Gastrocnemius medialis (tissue), 4 donors: ENCODE measurements at regions of chr6 and their contacts with region 1.

Region 1: DNA sequence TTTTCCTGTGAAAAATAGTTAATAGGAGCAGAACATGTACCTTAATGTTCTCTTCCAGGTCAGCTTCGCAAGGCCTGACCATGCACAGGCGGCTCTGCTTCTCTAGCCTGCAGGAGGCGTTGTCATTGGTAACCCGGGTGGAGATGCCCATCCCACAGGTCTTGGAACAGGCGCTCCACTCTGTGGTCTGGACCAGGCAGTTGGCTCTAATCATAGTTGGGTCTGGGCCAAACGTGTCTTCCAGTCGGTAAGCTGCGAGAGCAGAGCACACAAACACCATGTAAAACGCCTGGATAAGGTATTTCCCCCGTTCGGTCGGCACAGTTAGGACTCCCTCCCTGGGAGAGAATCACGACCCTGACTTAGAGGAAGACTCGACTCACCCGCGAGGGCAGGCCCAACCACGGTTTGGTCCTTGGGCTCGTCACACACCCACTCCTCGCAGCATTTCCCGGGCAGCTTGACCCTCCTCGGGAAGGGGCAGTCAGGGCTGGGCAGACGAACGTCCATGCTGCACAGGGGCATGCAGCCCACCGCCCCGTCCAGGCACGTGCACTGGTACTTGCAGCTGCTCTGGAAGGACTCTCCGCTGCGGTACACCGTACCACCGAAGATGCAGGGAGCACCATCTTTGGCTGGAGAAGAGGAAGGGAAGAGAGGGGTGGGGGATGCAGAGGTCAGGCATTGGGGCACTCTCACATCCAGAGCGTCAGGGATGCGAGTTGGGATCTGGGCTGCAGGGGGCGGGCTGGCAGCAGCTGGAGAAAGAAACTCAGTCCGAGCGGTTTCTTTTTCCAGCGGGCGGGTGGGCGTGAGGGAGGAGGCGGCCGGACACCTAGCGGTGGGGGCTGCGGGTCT is 1.0 kb downstream of the CCN2 start:
- DNase-seq: peak; percentile 18 to 46
- ATAC-seq: peak; percentile 27 to 48
- H3K4me3 ChIP-seq: peak overlapping the region; percentile 58 to 64 (median 61)
- H3K27ac ChIP-seq: peak overlapping the region; percentile 61 to 82 (median 75)
- H3K4me1 ChIP-seq: peaks cover 5 to 6% of the 10 kb centered on the region in 2 donors
- H3K27me3 ChIP-seq: peaks cover 9 to 29% (median 9%) of the 10 kb centered on the region in 3 donors
- CTCF ChIP-seq: peak in 3 of 5 experiments; percentile 26 to 49 (median 43)
- POLR2A ChIP-seq: no peak

Region 2: DNA sequence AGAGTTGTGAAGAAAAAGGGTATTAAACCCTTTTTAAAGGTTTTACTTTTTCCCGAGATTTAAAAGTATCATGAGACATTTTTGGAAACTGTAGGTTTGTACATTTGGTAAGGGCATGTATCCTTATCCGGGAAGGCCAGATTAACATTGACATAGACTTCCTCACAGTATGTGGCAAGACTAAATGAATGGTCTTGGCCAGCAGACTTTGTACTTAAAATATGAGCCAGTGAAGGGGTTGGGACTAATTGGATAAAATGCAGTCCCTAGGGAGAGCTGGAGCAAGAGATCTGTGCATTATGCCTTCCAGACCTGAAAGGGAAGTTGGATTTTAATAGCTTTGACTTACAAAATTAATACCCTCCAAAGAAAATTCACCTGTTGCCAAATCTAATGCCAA is 61.4 kb after region 1 on chr6:
- in situ Hi-C with region 1: no loop called
- intact Hi-C with region 1: loop called (anchors 5 kb)
- DNase-seq: no peak
- ATAC-seq: peak; percentile 49 to 65
- H3K4me3 ChIP-seq: no peak overlapping the region
- H3K27ac ChIP-seq: peak overlapping the region in 1 of 4 donors; percentile 13
- H3K4me1 ChIP-seq: peaks cover 0 to 6% of the 10 kb centered on the region in 2 donors
- H3K27me3 ChIP-seq: no peaks in the 10 kb centered on the region
- CTCF ChIP-seq: no peak
- POLR2A ChIP-seq: no peak

Region 3: GRCh38 chr6:132041706-132042105 is 91.6 kb after region 1 on chr6:
- in situ Hi-C with region 1: no loop called
- intact Hi-C with region 1: no loop called
- DNase-seq: no peak
- ATAC-seq: no peak
- H3K4me3 ChIP-seq: no peak overlapping the region
- H3K27ac ChIP-seq: no peak overlapping the region
- H3K4me1 ChIP-seq: no peaks in the 10 kb centered on the region
- H3K27me3 ChIP-seq: no peaks in the 10 kb centered on the region
- CTCF ChIP-seq: no peak
- POLR2A ChIP-seq: no peak

Region 4: GRCh38 chr6:132131758-132132157 is 181.6 kb after region 1 on chr6:
- in situ Hi-C with region 1: no loop called
- intact Hi-C with region 1: loop called (anchors 10 kb)
- DNase-seq: peak in 1 of 2 donors; percentile 17
- ATAC-seq: peak; percentile 45 to 72
- H3K4me3 ChIP-seq: no peak overlapping the region
- H3K27ac ChIP-seq: peak overlapping the region; percentile 55 to 68 (median 66)
- H3K4me1 ChIP-seq: peaks cover 0 to 5% of the 10 kb centered on the region in 2 donors
- H3K27me3 ChIP-seq: no peaks in the 10 kb centered on the region
- CTCF ChIP-seq: no peak
- POLR2A ChIP-seq: no peak

Region 5: DNA sequence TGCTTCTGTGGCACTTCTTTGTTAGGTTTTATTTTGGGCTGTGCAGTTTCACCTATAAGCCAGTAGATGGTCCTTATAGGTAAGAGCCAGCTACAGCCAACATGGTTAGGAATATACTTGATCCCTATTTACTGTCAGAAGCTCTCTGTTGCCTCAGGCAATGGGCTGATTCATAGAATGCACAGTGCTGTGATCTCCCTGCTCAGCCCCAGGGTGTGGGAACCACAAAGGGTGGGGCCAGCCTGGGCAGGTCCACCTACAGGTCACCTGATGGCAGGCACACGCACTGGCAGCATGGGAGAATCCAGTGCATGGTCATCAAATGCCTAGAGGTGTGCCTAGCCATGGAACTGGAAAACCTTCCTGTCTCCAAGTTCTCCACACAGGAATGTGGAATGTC is 259.2 kb after region 1 on chr6:
- in situ Hi-C with region 1: no loop called
- intact Hi-C with region 1: loop called (anchors 5 kb)
- DNase-seq: no peak
- ATAC-seq: no peak
- H3K4me3 ChIP-seq: no peak overlapping the region
- H3K27ac ChIP-seq: no peak overlapping the region
- H3K4me1 ChIP-seq: no peaks in the 10 kb centered on the region
- H3K27me3 ChIP-seq: no peaks in the 10 kb centered on the region
- CTCF ChIP-seq: no peak
- POLR2A ChIP-seq: no peak